PC-9 (cell line): ENCODE measurements at regions of chr2 and their contacts with region 1.

Region 1: DNA sequence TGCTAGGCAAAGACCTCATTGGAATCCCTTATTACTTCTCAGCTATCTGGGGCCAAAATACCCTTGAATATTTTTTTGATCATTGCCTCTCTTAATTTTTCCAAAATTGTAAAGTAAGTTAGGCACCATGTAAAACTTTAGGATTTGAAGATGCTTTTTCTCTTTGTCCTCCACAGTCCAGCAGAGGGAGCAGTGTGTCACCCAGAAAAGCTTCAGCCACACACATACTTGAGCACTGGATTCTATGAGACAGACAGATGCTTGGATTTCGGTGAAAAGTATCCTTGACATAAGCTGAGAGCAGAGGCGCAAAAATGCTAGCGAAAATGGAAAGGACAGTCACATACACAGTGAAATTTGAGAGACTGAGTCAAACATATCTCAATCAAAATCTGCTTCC is 74.7 kb upstream of the KCNJ3 start:
- DNase-seq: peak in 1 of 2 experiments; percentile 21
- H3K4me3 ChIP-seq: no peak overlapping the region
- H3K27ac ChIP-seq: no peak overlapping the region
- H3K4me1 ChIP-seq: no peaks in the 10 kb centered on the region
- H3K27me3 ChIP-seq: no peaks in the 10 kb centered on the region
- CTCF ChIP-seq: peak; percentile 63; the same call in 1 of the 2 replicates

Region 2: GRCh38 chr2:154658854-154659253 is 35.0 kb after region 1 on chr2:
- CTCF ChIA-PET with region 1: no interaction called
- POLR2A ChIA-PET with region 1: no interaction called
- intact Hi-C with region 1: no loop called
- DNase-seq: no peak
- H3K4me3 ChIP-seq: no peak overlapping the region
- H3K27ac ChIP-seq: no peak overlapping the region
- H3K4me1 ChIP-seq: no peaks in the 10 kb centered on the region
- H3K27me3 ChIP-seq: no peaks in the 10 kb centered on the region
- CTCF ChIP-seq: no peak

Region 3: DNA sequence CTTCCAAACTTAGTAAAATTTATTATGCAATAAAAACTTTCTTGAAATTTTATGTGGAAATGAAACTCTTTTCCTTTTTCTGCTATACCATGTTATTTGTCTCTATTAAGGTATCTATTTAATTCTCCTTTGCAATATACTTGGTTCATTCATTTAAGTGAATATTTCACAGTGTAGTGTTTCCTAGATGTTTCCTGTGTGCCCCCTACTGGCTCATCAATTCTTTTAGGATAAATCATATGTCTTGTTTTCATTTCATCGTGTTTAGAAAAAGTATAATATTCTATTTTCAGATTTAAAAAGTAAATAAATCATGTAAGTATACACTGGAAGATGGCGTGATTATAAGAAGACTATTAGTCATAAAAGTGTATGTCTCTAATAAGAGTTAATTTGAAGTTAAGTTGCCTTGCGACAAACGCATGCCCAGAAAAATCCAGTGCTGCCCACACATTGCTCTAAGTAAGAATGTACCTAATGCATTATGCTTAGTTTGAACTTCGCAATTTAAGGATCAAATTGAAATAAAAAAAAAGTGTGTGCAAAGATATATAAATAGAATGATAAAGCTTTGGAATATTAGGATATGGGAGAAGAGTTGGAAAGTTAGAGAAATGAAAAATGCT is 600.1 kb after region 1 on chr2:
- CTCF ChIA-PET with region 1: no interaction called
- POLR2A ChIA-PET with region 1: no interaction called
- intact Hi-C with region 1: loop called (anchors 2 kb)
- DNase-seq: no peak
- H3K4me3 ChIP-seq: no peak overlapping the region
- H3K27ac ChIP-seq: no peak overlapping the region
- H3K4me1 ChIP-seq: no peaks in the 10 kb centered on the region
- H3K27me3 ChIP-seq: no peaks in the 10 kb centered on the region
- CTCF ChIP-seq: peak; percentile 63

Region 4: DNA sequence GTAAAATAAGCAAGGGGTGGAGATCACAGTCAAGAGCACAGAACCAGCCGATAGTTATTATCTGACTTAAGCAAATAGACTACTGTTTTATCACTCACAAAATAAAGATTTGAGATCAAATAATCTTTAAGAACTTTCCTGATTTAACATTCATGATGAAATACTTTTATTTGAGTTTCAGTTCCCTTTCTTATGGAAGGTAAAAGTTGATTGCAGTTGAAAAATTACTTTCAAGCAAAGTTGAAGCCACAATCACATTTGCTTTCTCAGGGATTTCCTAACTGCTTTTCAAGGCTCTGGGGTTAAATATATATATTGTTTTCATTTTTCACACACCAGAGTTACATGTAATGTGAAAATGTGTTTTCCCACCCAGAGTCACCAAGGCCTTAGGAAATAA is 674.2 kb after region 1 on chr2:
- CTCF ChIA-PET with region 1: no interaction called
- POLR2A ChIA-PET with region 1: no interaction called
- intact Hi-C with region 1: loop called (anchors 10 kb)
- DNase-seq: no peak
- H3K4me3 ChIP-seq: no peak overlapping the region
- H3K27ac ChIP-seq: no peak overlapping the region
- H3K4me1 ChIP-seq: no peaks in the 10 kb centered on the region
- H3K27me3 ChIP-seq: no peaks in the 10 kb centered on the region
- CTCF ChIP-seq: no peak